ENCODE measurements at regions of chr3 and their contacts with region 1.

Region 1: GRCh38 chr3:189820365-189820720 is 189.2 kb downstream of the TP63 start:
- DNase-seq: no peak
- ATAC-seq: no peak
- H3K4me3 ChIP-seq: no peak overlapping the region
- H3K4me3 Mint-ChIP-seq: no peak overlapping the region
- H3K27ac ChIP-seq: no peak overlapping the region
- H3K27ac Mint-ChIP-seq: no peak overlapping the region
- H3K4me1 ChIP-seq: no peaks in the 10 kb centered on the region
- H3K4me1 Mint-ChIP-seq: peaks cover 0 to 6% (median 0%) of the 10 kb centered on the region in 7 donors
- H3K27me3 ChIP-seq: no peaks in the 10 kb centered on the region
- H3K27me3 Mint-ChIP-seq: peaks cover 0 to 3% (median 0%) of the 10 kb centered on the region in 5 donors

Region 2: DNA sequence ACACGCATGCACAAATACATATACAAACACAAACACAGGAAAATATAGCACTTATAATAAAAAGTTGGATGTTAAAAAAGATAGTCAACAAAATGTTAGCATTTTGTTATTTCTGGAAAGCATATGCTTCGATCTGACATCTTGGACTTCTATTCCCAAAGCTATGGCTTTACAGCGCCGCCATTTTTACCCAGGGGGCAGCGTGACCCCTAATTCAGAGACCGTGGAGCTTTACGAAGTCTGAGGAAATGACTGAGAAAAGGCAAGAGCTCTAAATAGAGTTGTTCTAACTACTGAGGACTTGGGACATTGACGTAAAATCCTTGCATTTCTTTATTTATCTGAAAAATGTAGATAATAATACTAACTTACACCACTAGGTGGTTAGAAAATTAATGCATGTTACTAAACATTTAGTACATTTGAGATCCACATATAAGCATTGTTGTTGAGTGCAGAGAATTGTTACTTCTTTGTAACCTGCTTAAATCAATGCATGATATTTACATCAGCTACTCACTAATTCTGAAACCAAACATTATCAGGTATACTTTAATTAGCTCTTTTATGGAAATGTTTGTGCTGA is 33.8 kb before region 1 on chr3:
- CTCF ChIA-PET with region 1: interaction called, 10 read pairs
- POLR2A ChIA-PET with region 1: no interaction called
- intact Hi-C with region 1: no loop called
- DNase-seq: no peak
- ATAC-seq: no peak
- H3K4me3 ChIP-seq: no peak overlapping the region
- H3K4me3 Mint-ChIP-seq: no peak overlapping the region
- H3K27ac ChIP-seq: no peak overlapping the region
- H3K27ac Mint-ChIP-seq: no peak overlapping the region
- H3K4me1 ChIP-seq: no peaks in the 10 kb centered on the region
- H3K4me1 Mint-ChIP-seq: peaks cover 4 to 15% (median 10%) of the 10 kb centered on the region in 7 donors
- H3K27me3 ChIP-seq: no peaks in the 10 kb centered on the region
- H3K27me3 Mint-ChIP-seq: peaks cover 0 to 4% (median 0%) of the 10 kb centered on the region in 5 donors

Measured in naive thymus-derived CD4-positive, alpha-beta T cell (primary cell).